ENCODE measurements at regions of chr1 and their contacts with region 1.

Region 1: DNA sequence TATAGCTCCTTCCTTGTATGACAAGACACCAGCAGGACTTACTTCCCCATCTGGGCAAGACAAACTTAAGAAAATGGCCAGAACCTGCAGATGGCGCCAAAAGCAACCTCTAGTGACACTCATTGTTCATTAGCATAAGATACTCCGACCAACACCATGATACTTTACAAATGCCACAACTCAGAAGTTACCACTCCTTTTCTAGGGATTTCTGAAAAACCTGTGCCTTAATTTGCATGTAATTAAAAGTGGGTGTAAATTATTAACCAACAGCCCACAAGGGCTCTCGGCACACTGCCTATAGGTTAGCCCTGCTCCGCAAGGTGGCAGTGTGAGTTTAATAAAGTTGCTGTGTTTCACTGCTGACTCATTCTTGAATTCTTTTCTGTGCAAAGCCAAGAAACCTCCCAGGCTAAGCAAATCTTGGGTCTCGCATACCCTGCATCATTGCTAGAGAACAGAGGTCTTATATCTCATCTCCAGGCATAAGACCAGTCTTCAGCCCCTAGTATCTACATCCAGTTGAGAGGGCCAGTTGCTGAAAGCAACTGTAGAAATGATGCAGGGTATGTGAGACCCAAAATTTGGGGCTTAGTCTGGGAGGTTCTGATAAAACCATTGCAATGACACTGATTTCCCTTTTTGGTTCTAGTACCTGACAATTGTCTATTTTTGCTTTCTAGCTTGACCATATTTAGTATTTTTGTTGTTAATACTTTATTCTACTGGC is 86.4 kb downstream of the FAF1 start:
- DNase-seq: peak; percentile 84
- H3K4me3 Mint-ChIP-seq: peak overlapping the region; percentile 67
- H3K27ac Mint-ChIP-seq: peak overlapping the region; percentile 27
- H3K4me1 Mint-ChIP-seq: no peaks in the 10 kb centered on the region
- H3K27me3 Mint-ChIP-seq: no peaks in the 10 kb centered on the region
- CTCF ChIP-seq: peak; percentile 78

Region 2: DNA sequence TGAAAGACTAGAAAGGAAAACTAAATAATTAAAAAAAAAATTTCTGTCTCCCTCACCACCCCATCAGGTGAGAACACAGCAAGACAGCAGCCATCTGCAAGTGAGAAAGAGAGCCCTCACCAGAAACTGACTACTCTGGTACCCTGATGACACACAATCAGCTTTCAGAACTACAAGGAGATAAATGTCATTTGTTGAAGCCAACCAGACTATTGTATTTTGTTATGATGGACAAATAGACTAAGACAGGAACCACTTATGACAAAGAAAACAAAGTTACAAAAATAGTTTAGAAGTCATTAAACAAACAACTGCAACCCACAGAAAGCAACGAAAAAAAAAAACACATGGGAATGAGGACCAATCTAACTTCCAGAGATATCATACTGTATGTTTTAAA is 11.9 kb before region 1 on chr1:
- CTCF ChIA-PET with region 1: interaction called, 22 read pairs
- POLR2A ChIA-PET with region 1: interaction called, 4 read pairs
- intact Hi-C with region 1: no loop called
- DNase-seq: no peak
- H3K4me3 Mint-ChIP-seq: no peak overlapping the region
- H3K27ac Mint-ChIP-seq: no peak overlapping the region
- H3K4me1 Mint-ChIP-seq: no peaks in the 10 kb centered on the region
- H3K27me3 Mint-ChIP-seq: no peaks in the 10 kb centered on the region
- CTCF ChIP-seq: no peak

Region 3: GRCh38 chr1:50898773-50899172 is 25.1 kb after region 1 on chr1:
- CTCF ChIA-PET with region 1: interaction called, 11 read pairs
- POLR2A ChIA-PET with region 1: no interaction called
- intact Hi-C with region 1: no loop called
- DNase-seq: no peak
- H3K4me3 Mint-ChIP-seq: no peak overlapping the region
- H3K27ac Mint-ChIP-seq: no peak overlapping the region
- H3K4me1 Mint-ChIP-seq: peaks cover 5% of the 10 kb centered on the region
- H3K27me3 Mint-ChIP-seq: no peaks in the 10 kb centered on the region
- CTCF ChIP-seq: no peak

Region 4: DNA sequence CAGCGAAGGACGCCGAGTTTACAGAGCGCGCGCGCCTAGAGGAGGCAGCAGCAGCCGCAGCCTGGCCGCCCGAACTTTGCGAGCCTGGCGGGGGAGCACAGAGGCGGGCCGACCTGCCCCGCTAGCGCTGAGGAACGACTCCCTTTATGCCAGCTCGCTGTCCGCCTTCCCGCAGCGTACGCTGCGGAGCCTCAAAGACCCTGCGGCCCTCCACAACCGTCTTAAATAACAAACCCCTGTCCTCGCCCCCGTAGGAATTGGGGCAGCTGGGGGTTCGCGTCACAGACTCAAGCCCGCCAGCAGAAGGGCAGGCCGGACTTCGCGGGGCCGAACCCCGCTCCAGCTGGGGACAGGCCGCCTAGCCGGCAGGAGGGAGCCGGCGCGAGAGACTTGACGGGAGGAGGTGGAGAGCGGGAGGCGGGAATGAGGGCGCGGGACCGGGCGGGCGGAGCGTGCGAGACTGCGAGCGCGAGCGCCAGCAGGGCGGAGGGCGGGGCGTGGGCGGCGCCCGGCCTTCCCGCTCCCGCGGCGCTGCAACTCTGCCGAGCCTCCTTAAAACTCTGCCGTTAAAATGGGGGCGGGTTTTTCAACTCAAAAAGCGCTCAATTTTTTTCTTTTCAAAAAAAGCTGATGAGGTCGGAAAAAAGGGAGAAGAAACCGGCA is 94.7 kb after region 1 on chr1:
- CTCF ChIA-PET with region 1: interaction called, 5 read pairs
- POLR2A ChIA-PET with region 1: interaction called, 4 read pairs
- intact Hi-C with region 1: loop called (anchors 5 kb)
- DNase-seq: peak; percentile 91
- H3K4me3 Mint-ChIP-seq: peak overlapping the region; percentile 86
- H3K27ac Mint-ChIP-seq: peak overlapping the region; percentile 95
- H3K4me1 Mint-ChIP-seq: peaks cover 8% of the 10 kb centered on the region
- H3K27me3 Mint-ChIP-seq: no peaks in the 10 kb centered on the region
- CTCF ChIP-seq: peak; percentile 42

Region 5: GRCh38 chr1:51044834-51045233 is 171.2 kb after region 1 on chr1:
- CTCF ChIA-PET with region 1: interaction called, 6 read pairs
- POLR2A ChIA-PET with region 1: no interaction called
- intact Hi-C with region 1: loop called (anchors 1 kb)
- DNase-seq: peak; percentile 12
- H3K4me3 Mint-ChIP-seq: no peak overlapping the region
- H3K27ac Mint-ChIP-seq: no peak overlapping the region
- H3K4me1 Mint-ChIP-seq: no peaks in the 10 kb centered on the region
- H3K27me3 Mint-ChIP-seq: no peaks in the 10 kb centered on the region
- CTCF ChIP-seq: peak; percentile 18